H1 (cell line): ENCODE measurements at regions of chr21 and their contacts with region 1.

Region 1: DNA sequence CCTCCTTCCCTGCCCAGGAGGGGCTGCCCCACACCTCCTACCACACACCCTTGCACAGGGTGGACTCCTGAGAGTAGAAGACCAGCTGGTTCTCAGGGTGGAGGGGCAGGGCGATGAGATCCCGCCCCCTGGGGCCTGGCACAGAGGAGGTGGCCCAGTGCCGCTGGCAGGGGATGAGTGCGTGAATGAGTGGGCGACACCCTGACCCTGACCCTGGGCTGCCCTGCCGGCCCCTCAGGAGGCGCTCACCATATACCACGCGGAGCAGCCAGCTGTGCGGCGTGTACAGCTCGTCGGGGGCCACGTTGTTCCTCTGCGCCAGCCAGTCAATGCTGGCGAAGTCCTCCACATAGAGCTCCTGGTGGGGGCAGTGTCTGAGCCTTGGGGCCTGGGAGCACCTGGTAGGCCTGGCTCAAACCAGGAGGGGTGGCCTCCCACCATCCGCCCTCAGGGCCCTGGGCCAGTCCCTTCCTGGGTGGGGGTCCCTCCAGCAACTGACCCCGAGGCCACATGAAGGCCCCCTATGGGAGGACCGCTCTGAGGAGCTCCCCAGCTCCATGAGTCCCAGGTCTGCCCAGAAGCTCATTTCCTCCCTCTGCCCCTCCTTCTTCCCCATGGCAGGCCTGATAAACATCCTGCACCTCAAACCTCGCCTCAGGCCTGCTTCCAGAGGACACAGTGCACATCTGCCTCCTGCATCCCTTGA is 13.0 kb downstream of the LSS start:
- DNase-seq: no peak
- H3K4me3 ChIP-seq: no peak overlapping the region
- H3K27ac ChIP-seq: no peak overlapping the region
- H3K4me1 ChIP-seq: peaks cover 0 to 2% (median 0%) of the 10 kb centered on the region in 4 experiments; a peak in 1 of 7 replicates
- H3K27me3 ChIP-seq: no peaks in the 10 kb centered on the region
- CTCF ChIP-seq: no peak
- EP300 ChIP-seq: no peak
- POLR2A ChIP-seq: no peak
- RAD21 ChIP-seq: no peak

Region 2: GRCh38 chr21:46153247-46154150 is 62.1 kb before region 1 on chr21:
- CTCF ChIA-PET with region 1: interaction called, 17 read pairs
- POLR2A ChIA-PET with region 1: no interaction called
- DNase-seq: peak; percentile 29 to 95
- H3K4me3 ChIP-seq: no peak overlapping the region; a peak in 1 of 8 replicates
- H3K27ac ChIP-seq: no peak overlapping the region; the same call in 1 of the 2 replicates
- H3K4me1 ChIP-seq: peaks cover 0 to 24% (median 15%) of the 10 kb centered on the region in 4 experiments; a peak in 5 of 7 replicates
- H3K27me3 ChIP-seq: no peaks in the 10 kb centered on the region
- CTCF ChIP-seq: peak in 2 of 3 experiments; percentile 75 to 83; a peak in 3 of 4 replicates
- EP300 ChIP-seq: no peak
- POLR2A ChIP-seq: no peak
- RAD21 ChIP-seq: peak; percentile 60 to 69; a peak in 3 of 4 replicates

Region 3: GRCh38 chr21:46226146-46226545 is 10.6 kb after region 1 on chr21:
- CTCF ChIA-PET with region 1: interaction called, 16 read pairs
- POLR2A ChIA-PET with region 1: interaction called, 4 read pairs
- DNase-seq: no peak
- H3K4me3 ChIP-seq: no peak overlapping the region
- H3K27ac ChIP-seq: no peak overlapping the region
- H3K4me1 ChIP-seq: peaks cover 3 to 12% (median 6%) of the 10 kb centered on the region in 4 experiments
- H3K27me3 ChIP-seq: peaks cover 0 to 4% (median 0%) of the 10 kb centered on the region in 4 experiments; a peak in 2 of 7 replicates
- CTCF ChIP-seq: no peak
- EP300 ChIP-seq: no peak
- POLR2A ChIP-seq: no peak
- RAD21 ChIP-seq: no peak

Region 4: GRCh38 chr21:46585191-46585953 is 369.8 kb after region 1 on chr21:
- CTCF ChIA-PET with region 1: no interaction called
- POLR2A ChIA-PET with region 1: no interaction called
- DNase-seq: no peak
- H3K4me3 ChIP-seq: no peak overlapping the region
- H3K27ac ChIP-seq: no peak overlapping the region
- H3K4me1 ChIP-seq: no peaks in the 10 kb centered on the region
- H3K27me3 ChIP-seq: no peaks in the 10 kb centered on the region
- CTCF ChIP-seq: no peak
- EP300 ChIP-seq: no peak
- POLR2A ChIP-seq: no peak
- RAD21 ChIP-seq: no peak